HEK293T (cell line): ENCODE measurements at regions of chr5 and their contacts with region 1.

Region 1: DNA sequence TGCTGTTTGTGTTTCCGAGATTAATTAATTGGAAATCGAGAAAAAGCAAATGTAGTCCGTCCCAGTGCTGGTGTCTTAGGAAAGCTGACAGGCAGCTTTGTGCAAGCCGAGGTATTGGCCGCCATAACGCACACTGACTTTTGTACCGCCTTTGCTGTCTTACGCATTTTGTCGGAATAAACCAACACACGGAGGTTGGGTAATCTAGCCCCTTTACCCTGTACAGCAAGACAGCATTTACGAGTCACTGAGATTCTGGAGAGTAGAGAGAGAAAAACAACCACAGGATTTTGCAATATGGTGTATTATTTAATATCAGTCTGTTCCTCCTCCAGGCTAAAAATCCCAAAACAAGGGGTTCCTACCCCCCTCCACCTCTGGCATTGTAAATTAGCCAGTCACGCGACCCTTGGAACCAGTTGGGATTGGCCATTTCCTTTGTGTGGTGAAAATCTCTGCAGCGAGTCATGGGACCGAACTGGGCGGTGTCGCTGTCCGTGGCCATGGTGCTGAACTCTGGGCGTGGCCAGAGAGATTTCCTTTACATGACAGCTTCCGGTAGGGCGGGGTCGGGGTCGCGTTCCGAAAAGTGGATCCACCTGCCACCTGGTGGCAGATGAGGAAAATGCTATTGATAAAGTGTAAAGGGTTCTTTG is 10.3 kb upstream of the PCDHB1 start:
- DNase-seq: peak; percentile 91

Region 2: DNA sequence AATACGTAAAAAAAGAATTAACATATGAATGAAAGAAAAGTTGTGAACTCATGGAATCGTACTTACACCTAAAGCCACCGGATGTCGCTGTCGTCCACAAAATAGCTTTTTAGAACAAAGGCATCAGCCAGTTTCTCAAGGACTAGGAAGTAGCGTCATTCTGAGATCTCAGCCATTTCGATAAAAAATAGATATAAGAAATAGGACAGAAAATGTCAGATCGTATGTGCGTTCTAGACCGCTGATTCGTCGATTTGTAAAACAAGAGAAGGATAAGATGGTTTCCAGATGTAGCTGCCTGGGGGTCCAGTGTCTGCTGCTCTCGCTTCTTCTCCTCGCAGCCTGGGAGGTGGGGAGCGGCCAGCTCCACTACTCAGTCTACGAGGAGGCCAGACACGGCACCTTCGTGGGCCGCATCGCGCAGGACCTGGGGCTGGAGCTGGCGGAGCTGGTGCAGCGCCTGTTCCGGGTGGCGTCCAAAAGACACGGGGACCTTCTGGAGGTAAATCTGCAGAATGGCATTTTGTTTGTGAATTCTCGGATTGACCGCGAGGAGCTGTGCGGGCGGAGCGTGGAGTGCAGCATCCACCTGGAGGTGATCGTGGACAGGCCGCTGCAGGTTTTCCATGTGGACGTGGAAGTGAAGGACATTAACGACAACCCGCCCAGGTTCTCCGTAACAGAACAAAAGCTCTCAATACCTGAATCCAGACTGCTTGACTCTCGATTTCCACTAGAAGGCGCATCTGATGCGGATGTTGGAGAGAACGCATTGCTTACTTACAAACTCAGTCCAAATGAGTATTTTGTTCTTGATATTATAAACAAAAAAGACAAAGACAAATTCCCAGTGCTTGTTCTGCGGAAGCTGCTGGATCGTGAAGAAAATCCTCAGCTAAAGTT is 184.9 kb before region 1 on chr5 and contains the start of gene PCDHA10:
- CTCF ChIA-PET with region 1: interaction called, 26 read pairs
- POLR2A ChIA-PET with region 1: interaction called, 9 read pairs
- DNase-seq: peak; percentile 14

Region 3: DNA sequence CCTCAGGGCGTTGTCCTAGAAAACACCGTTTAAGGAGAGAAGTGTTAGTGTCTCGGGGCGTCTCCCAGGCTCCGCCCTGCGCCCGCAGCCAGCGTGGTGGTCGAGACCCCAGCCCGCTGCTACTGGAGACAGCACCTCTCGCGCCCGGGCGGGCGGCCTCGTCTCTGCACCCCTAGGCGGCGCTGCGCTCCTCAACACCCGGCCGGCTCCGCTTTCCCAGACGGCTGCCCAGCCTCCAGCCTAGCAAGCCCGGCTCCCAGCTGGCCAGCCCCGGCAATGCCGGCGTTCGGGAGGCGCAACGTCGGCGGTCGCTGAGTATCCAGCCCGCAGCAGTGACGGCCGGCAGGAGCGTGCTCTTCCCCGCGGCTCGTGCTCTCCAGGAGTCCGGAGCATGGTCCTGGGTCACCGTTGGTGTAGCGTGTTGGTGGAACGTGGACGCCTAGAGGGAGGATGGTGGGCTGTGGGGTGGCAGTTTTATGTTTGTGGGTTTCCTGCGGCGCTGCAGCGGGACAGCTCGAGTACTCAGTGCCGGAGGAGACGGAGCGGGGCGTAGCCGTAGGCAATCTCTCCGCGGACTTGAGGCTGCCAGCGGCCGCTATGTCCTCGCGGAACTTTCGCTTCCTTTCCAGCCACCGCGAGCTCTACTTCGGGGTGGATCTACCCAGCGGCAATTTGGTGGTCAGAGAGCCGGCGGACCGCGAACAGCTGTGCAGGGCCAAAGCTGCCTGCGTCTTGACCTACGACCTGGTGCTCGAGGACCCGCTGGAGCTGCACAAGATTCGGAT is 114.3 kb before region 1 on chr5:
- CTCF ChIA-PET with region 1: interaction called, 47 read pairs
- POLR2A ChIA-PET with region 1: interaction called, 11 read pairs
- DNase-seq: peak; percentile 73

Region 4: DNA sequence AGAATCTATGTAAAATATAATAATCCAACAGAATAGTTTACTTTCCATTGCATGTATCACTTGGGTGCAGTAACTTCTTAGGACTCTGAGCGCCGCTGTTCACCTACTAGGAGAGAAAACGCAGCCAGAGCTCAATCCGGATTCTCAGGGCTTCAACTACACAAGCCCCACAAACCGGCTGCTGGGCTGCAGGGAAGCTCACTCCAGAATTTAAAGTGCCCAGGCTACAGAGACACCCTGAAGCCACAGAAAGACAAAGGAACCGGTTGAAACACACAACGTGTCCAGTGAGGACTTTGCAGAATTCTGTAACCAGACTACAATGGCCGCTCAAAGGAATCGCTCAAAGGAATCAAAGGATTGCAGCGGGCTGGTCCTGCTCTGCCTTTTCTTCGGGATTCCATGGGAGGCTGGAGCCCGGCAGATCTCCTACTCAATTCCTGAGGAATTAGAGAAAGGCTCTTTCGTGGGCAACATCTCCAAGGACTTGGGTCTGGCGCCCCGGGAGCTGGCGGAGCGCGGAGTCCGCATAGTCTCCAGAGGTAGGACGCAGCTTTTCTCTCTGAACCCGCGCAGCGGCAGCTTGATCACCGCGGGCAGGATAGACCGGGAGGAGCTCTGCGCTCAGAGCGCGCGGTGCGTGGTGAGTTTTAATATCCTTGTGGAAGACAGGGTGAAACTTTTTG is 372.1 kb after region 1 on chr5 and contains the start of gene PCDHGA10:
- CTCF ChIA-PET with region 1: no interaction called
- POLR2A ChIA-PET with region 1: no interaction called
- DNase-seq: peak; percentile 45